Common myeloid progenitor, CD34-positive (primary cell): ENCODE measurements at regions of chr11 and their contacts with region 1.

Region 1: DNA sequence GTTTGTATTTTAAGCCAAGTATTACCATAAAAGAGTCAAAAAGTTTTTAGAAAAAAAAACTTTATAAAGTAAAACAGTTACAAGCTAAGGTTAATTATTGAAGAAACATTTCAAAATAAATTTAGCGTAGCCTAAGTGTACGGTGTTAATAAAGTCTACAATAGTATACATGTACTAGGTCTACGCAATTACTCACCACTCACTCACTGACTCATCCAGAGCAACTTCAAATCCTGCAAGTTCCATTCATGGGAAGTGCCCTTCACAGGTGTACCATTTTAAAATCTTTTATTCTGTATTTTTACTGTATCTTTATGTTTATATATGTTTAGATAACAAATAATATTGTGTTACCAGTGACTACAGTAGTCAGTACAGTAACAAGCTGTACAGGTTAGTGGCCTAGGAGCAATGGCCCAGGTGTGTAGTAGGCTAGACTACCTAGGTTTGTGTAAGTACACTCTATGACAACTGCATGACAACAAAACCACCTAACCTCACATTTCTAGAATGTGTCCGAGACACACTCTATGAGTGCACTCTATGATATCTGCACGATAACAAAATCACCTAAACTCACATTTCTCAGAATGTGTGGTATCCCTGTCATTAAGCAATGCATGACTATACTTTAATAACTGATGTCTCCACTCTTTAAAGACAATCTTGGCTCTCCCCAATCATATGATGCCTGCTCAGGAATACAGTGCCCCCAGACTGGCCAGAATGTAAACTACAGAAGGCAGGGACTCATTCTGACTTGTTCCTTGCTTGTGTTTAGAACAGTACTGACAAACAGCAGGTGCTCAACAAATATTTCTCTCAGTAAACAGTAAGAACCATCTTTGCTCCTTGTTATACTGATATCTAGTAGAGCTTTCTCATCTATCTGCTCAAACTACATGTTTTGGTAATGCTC is 21.2 kb downstream of the KMT5B start:
- DNase-seq: no peak
- H3K4me3 ChIP-seq: no peak overlapping the region
- H3K27ac ChIP-seq: no peak overlapping the region
- H3K4me1 ChIP-seq: peaks cover 2 to 13% (median 6%) of the 10 kb centered on the region in 4 experiments
- H3K27me3 ChIP-seq: no peaks in the 10 kb centered on the region

Region 2: GRCh38 chr11:68121067-68121899 is 70.6 kb before region 1 on chr11 and contains the start of gene CHKA:
- CTCF ChIA-PET with region 1: no interaction called
- POLR2A ChIA-PET with region 1: no interaction called
- DNase-seq: peak; percentile 87 to 96 (median 94)
- H3K4me3 ChIP-seq: peak within 1 kb of the TSS; percentile 32 to 89 (median 80)
- H3K27ac ChIP-seq: peak within 1 kb of the TSS; percentile 74 to 85
- H3K4me1 ChIP-seq: peaks cover 18 to 43% (median 36%) of the 10 kb centered on the region in 4 experiments
- H3K27me3 ChIP-seq: no peaks in the 10 kb centered on the region

Region 3: GRCh38 chr11:68204402-68204801 is 12.5 kb after region 1 on chr11:
- CTCF ChIA-PET with region 1: interaction called, 17 read pairs
- POLR2A ChIA-PET with region 1: interaction called, 3 read pairs
- DNase-seq: no peak
- H3K4me3 ChIP-seq: no peak overlapping the region
- H3K27ac ChIP-seq: no peak overlapping the region
- H3K4me1 ChIP-seq: peaks cover 0 to 13% (median 6%) of the 10 kb centered on the region in 4 experiments
- H3K27me3 ChIP-seq: no peaks in the 10 kb centered on the region